ENCODE measurements at regions of chr2 and their contacts with region 1.

Region 1: DNA sequence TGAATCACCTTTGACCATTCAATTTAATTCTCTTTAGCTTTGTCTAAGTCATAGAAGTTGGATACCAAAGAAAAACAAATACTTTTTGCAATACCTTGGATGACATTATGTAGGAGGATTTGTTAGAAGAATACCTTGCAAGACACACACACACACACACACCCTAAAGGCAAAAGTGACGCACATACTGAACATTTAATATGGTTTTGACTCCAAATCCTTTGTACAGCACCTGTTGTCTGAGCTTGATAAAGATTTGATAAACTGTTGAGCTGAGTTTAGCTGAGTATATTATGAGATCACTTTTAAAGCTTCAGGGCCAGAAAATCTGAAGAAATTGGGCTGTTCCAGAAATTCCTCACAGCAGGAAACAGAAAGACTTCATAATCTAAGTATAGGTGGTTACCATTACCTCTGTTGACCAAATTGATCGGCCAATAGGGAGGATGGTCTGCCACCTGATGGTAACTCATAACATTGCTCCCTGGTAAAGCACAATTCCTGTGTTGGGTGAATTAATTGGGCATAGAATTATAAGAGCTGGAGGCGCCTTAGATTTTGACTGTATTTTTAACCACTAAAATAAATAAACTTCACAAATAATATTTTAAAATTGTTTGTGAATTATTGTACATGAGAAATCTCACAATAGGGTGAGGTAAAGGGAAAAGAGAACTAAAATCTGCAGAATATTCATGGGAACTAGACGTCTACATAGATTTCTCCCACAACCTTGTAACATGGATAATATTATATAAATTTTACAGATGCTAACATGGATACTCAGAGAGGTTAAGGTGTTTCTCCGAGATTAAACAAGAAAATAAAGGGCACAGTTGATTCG is 21.9 kb upstream of the RPIA start:
- DNase-seq: peak; percentile 54
- H3K4me3 Mint-ChIP-seq: no peak overlapping the region
- H3K27ac Mint-ChIP-seq: no peak overlapping the region
- H3K4me1 Mint-ChIP-seq: peaks cover 12% of the 10 kb centered on the region
- H3K27me3 Mint-ChIP-seq: peaks cover 26% of the 10 kb centered on the region
- CTCF ChIP-seq: peak; percentile 46

Region 2: GRCh38 chr2:88590998-88591613 is 78.5 kb before region 1 on chr2:
- CTCF ChIA-PET with region 1: interaction called, 10 read pairs
- intact Hi-C with region 1: loop called (anchors 1 kb)
- DNase-seq: peak; percentile 59
- H3K4me3 Mint-ChIP-seq: no peak overlapping the region
- H3K27ac Mint-ChIP-seq: no peak overlapping the region
- H3K4me1 Mint-ChIP-seq: no peaks in the 10 kb centered on the region
- H3K27me3 Mint-ChIP-seq: no peaks in the 10 kb centered on the region
- CTCF ChIP-seq: peak; percentile 62

Region 3: DNA sequence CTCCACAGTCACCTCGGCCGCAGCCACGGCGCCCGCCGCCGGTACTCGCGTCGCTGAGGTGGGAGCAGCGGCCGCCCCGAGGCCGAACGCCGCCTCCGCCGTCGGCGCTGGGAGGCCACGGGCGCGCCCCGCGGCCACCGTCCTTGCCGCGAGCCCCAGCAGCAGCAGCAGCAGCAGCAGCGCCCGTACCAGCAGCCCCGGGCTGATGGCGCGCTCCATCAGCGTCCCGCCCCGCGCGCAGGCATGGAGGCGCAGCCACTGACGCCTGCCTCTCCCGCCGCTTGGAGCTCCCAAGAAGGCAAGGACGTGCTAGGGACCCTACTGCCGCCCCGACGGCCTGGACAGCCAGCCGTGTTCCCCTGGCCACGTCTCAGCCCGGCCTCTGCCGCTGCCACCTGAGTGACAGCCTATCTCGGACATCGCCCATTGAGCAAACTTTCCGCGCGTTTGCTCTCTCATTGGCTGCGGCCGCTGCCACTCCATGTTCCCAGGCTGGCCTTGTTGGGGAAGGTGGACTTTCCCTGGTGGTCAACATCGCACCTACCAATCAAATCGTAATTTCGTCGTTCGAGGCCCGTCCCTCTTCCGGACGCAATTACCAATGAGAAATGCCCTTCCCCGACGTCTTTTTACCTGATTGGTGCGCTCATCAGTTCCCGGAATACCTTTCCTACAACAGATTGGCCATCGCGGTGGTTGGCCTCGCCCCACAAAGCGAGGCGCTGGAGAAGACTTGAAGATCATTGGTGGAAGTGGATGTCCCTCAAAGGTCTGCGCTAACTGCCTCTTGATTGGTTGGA is 42.3 kb before region 1 on chr2 and contains the start of gene EIF2AK3:
- CTCF ChIA-PET with region 1: interaction called, 6 read pairs
- intact Hi-C with region 1: loop called (anchors 2 kb)
- DNase-seq: peak; percentile 96
- H3K4me3 Mint-ChIP-seq: no peak within 1 kb of the TSS
- H3K27ac Mint-ChIP-seq: peak within 1 kb of the TSS; percentile 40
- H3K4me1 Mint-ChIP-seq: peaks cover 12% of the 10 kb centered on the region
- H3K27me3 Mint-ChIP-seq: no peaks in the 10 kb centered on the region
- CTCF ChIP-seq: peak; percentile 32
- total RNA-seq, gene EIF2AK3: 16.1 and 17.4 TPM in 2 replicates

Measured in Calu3 (cell line).